WTC11 (cell line): ENCODE measurements at regions of chr5 and their contacts with region 1.

Region 1: GRCh38 chr5:83430130-83431010 is 41.2 kb upstream of the VCAN start:
- DNase-seq: peak; percentile 74
- ATAC-seq: peak; percentile 95
- H3K4me3 Mint-ChIP-seq: no peak overlapping the region
- H3K27ac Mint-ChIP-seq: no peak overlapping the region
- H3K4me1 Mint-ChIP-seq: peaks cover 20% of the 10 kb centered on the region
- H3K27me3 Mint-ChIP-seq: no peaks in the 10 kb centered on the region
- CTCF ChIP-seq: peak; percentile 77

Region 2: GRCh38 chr5:83473346-83474163 is 43.2 kb after region 1 on chr5:
- CTCF ChIA-PET with region 1: interaction called, 13 read pairs
- POLR2A ChIA-PET with region 1: no interaction called
- DNase-seq: peak; percentile 97
- ATAC-seq: peak; percentile 70
- H3K4me3 Mint-ChIP-seq: peak overlapping the region; percentile 85
- H3K27ac Mint-ChIP-seq: peak overlapping the region; percentile 94
- H3K4me1 Mint-ChIP-seq: peaks cover 52% of the 10 kb centered on the region
- H3K27me3 Mint-ChIP-seq: no peaks in the 10 kb centered on the region
- CTCF ChIP-seq: peak; percentile 70